ENCODE measurements at regions of chr6 and their contacts with region 1.

Region 1: GRCh38 chr6:79078075-79079025 is at the start of gene PHIP:
- DNase-seq: peak; percentile 97
- ATAC-seq: peak; percentile 84
- H3K4me3 ChIP-seq: peak within 1 kb of the TSS; percentile 75
- H3K27ac ChIP-seq: peak within 1 kb of the TSS; percentile 95
- H3K4me1 ChIP-seq: no peaks in the 10 kb centered on the region
- H3K27me3 ChIP-seq: no peaks in the 10 kb centered on the region
- CTCF ChIP-seq: no peak
- POLR2A ChIP-seq: peak; percentile 37; the same call in 1 of the 2 replicates
- RAD21 ChIP-seq: 0 out of 2 replicates have a peak, but pooled peaks have one; percentile 3
- total RNA-seq, gene PHIP: 20.4 and 32.2 TPM in 2 replicates

Region 2: DNA sequence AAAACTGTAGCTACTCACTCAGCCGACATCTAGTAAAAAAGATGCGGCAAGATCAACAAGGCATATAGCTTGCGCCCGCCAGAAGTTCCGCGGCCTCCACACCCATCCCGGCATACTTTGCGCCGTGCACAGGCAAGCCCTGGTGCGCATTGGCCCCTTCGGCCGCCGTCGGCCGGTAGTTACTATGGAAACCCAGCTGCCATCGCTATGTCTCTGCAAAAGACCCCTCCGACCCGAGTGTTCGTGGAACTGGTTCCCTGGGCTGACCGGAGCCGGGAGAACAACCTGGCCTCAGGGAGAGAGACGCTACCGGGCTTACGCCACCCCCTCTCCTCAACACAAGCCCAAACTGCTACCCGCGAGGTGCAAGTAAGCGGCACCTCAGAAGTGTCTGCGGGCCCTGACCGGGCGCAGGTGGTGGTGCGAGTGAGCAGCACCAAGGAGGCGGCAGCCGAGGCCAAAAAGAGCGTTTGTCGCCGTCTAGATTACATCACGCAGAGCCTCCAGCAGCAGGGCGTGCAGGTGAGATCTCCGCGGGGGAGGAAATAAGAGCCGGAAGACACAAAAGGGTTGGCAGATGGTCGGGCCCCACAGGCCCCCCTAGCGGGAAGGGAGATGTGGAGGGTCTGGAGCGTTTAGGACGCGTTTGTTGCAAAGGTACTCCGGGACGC is 210.8 kb before region 1 on chr6 and contains the start of gene IRAK1BP1:
- CTCF ChIA-PET with region 1: no interaction called
- POLR2A ChIA-PET with region 1: no interaction called
- dilution Hi-C with region 1: no loop called
- in situ Hi-C with region 1: no loop called
- intact Hi-C with region 1: loop called (anchors 5 kb)
- DNase-seq: peak; percentile 75
- ATAC-seq: peak; percentile 100
- H3K4me3 ChIP-seq: peak within 1 kb of the TSS; percentile 90
- H3K27ac ChIP-seq: peak within 1 kb of the TSS; percentile 68
- H3K4me1 ChIP-seq: no peaks in the 10 kb centered on the region
- H3K27me3 ChIP-seq: no peaks in the 10 kb centered on the region
- CTCF ChIP-seq: no peak
- POLR2A ChIP-seq: no peak
- RAD21 ChIP-seq: no peak
- total RNA-seq, gene IRAK1BP1: 1.9 and 2.2 TPM in 2 replicates

Region 3: GRCh38 chr6:79094938-79095337 is 16.6 kb after region 1 on chr6:
- CTCF ChIA-PET with region 1: no interaction called
- POLR2A ChIA-PET with region 1: no interaction called
- dilution Hi-C with region 1: no loop called
- in situ Hi-C with region 1: no loop called
- intact Hi-C with region 1: no loop called
- DNase-seq: no peak
- ATAC-seq: no peak
- H3K4me3 ChIP-seq: no peak overlapping the region
- H3K27ac ChIP-seq: no peak overlapping the region
- H3K4me1 ChIP-seq: no peaks in the 10 kb centered on the region
- H3K27me3 ChIP-seq: no peaks in the 10 kb centered on the region
- CTCF ChIP-seq: no peak
- POLR2A ChIP-seq: no peak
- RAD21 ChIP-seq: no peak

Region 4: DNA sequence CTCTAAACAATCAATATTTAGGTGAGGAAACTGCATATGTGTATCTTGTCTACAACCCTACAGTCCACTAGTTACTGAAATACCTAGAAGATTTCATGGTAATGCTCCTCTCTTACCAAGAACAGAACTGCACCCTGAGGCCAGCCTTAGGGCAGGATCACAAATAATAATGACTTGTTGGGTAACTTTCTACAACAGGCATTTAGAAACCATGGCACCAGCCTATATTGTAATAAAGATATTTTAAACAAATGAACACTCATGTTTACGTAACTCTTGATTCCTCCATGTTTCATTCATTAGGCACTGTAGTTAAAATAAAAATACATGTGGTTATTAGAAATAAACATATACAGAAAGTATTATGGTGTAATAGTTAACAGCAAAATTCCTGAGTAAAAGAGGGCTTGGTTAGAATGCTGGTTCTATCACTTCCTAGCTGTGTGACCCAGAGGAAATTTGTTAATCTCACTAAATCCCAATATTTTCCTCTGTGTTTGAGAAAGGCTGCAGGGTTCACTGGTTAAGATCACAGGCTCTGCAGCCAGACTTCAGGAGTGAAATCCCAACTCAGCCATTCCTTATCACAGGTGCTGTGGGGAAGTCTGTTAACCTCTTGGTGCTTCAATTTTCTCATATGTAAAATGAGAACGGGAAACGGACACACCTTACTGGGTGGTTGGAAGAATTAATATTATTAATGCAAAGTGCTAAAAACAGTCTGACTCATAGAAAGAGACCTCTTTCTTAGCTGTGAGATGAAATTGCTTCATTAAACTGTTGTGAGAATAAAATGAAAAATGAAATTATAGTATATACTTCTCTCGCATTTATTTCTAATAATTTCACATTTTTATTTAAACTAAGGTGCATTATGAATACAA is 147.6 kb after region 1 on chr6:
- CTCF ChIA-PET with region 1: no interaction called
- POLR2A ChIA-PET with region 1: no interaction called
- dilution Hi-C with region 1: no loop called
- in situ Hi-C with region 1: loop called (anchors 10 kb)
- intact Hi-C with region 1: no loop called
- DNase-seq: peak; percentile 2
- ATAC-seq: peak; percentile 69
- H3K4me3 ChIP-seq: no peak overlapping the region
- H3K27ac ChIP-seq: no peak overlapping the region
- H3K4me1 ChIP-seq: peaks cover 2% of the 10 kb centered on the region; the same call in 1 of the 2 replicates
- H3K27me3 ChIP-seq: no peaks in the 10 kb centered on the region
- CTCF ChIP-seq: no peak
- POLR2A ChIP-seq: no peak
- RAD21 ChIP-seq: no peak

Region 5: GRCh38 chr6:79466207-79466834 is 388.0 kb after region 1 on chr6:
- CTCF ChIA-PET with region 1: no interaction called
- POLR2A ChIA-PET with region 1: no interaction called
- dilution Hi-C with region 1: no loop called
- in situ Hi-C with region 1: no loop called
- intact Hi-C with region 1: loop called (anchors 5 kb)
- DNase-seq: peak; percentile 39
- ATAC-seq: peak; percentile 52
- H3K4me3 ChIP-seq: no peak overlapping the region
- H3K27ac ChIP-seq: no peak overlapping the region
- H3K4me1 ChIP-seq: peaks cover 4% of the 10 kb centered on the region
- H3K27me3 ChIP-seq: peaks cover 3% of the 10 kb centered on the region; the same call in 1 of the 2 replicates
- CTCF ChIP-seq: peak; percentile 58
- POLR2A ChIP-seq: no peak
- RAD21 ChIP-seq: peak; percentile 61

Region 6: DNA sequence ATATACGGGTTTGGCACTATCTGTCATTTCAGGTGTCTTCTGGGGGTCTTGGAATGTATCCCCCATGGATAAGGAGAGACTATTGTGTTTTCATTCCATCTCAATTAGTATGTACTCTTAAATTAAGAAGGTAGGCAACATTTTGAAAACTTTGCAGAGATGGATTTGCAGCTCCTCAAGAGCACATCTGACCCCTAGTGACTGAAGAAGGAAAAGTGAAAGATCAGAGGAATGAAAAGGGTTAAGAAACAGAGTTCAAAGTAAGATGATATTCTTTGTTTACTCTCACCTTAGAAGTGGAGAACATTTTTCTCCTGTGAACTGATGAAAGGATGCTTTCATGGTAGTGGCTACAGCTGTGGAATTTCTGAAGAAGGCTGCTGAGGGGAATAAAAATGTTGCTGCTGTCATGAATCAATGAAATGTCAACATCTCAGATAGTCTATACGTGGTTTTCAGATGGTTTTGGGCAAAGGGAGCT is 594.3 kb after region 1 on chr6:
- CTCF ChIA-PET with region 1: no interaction called
- POLR2A ChIA-PET with region 1: no interaction called
- dilution Hi-C with region 1: no loop called
- in situ Hi-C with region 1: no loop called
- intact Hi-C with region 1: loop called (anchors 10 kb)
- DNase-seq: peak; percentile 45
- ATAC-seq: peak; percentile 61
- H3K4me3 ChIP-seq: no peak overlapping the region
- H3K27ac ChIP-seq: no peak overlapping the region
- H3K4me1 ChIP-seq: peaks cover 5% of the 10 kb centered on the region
- H3K27me3 ChIP-seq: no peaks in the 10 kb centered on the region
- CTCF ChIP-seq: peak; percentile 58
- POLR2A ChIP-seq: no peak
- RAD21 ChIP-seq: peak; percentile 73